ENCODE measurements at regions of chr6 and their contacts with region 1.

Region 1: DNA sequence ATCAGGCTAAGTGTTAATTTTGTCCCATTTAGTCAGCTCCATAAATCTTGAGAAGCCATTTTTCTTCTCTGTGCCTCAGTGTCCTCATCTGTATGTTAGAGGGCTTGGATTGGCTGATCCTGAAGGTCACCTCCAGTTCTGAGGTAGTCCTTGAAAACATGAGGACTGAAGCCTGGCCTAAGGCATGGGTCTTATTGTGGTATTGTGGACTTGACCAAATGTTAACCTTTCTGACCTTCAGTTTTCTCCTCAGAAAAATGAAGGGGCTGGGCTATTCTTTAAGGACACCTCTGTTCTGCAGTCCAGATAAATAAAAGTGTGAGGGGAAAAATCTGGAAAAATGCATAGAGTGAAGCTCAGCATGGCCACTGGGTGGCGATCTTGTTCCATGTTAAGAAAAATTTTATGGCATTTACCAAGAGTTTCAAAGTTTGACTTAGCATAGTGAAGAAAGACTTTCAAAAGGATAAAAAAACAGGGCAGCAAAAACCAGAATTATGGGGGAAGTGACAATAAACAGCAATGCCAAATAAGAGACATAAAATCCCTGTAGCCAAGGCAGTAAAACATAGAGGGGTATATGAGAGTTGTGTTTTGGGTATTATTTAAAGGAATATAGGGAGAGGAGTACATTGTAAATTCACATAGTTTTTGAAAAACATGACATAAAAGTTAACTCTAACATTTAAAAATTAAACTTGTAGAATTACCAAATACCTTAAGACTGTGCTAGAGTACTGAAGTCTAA is 13.2 kb upstream of the TFB1M start:
- DNase-seq: peak; percentile 77

Region 2: GRCh38 chr6:155493694-155494143 is 166.2 kb after region 1 on chr6:
- intact Hi-C with region 1: loop called in 1 of 2 experiments (anchors 2 kb)
- DNase-seq: no peak

Region 3: GRCh38 chr6:155530219-155530834 is 202.8 kb after region 1 on chr6:
- intact Hi-C with region 1: loop called (anchors 10 kb)
- DNase-seq: no peak

Region 4: DNA sequence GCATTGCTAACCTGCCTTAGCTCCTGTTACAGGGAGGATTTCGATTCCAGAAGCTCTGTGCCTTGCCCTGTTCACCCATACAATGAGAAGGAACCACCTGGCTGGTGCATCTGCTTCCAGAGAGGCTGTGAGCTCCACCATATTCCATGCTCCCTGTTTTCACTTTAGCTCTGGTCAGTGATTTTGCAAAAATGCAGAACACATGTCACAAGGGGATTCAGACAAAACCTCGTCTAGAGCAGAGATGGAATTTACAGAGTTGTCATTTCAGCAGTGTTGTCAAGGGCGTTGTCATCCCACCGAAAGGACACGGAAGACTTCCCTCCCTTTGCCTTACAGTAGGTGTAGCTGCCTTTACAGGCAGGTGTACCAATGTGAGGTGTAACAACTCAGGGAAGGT is 1226.7 kb after region 1 on chr6:
- intact Hi-C with region 1: loop called in 1 of 2 experiments (anchors 5 kb)
- DNase-seq: no peak

Measured in posterior vena cava (tissue), 2 donors.